PC-9 (cell line): ENCODE measurements at regions of chr5 and their contacts with region 1.

Region 1: DNA sequence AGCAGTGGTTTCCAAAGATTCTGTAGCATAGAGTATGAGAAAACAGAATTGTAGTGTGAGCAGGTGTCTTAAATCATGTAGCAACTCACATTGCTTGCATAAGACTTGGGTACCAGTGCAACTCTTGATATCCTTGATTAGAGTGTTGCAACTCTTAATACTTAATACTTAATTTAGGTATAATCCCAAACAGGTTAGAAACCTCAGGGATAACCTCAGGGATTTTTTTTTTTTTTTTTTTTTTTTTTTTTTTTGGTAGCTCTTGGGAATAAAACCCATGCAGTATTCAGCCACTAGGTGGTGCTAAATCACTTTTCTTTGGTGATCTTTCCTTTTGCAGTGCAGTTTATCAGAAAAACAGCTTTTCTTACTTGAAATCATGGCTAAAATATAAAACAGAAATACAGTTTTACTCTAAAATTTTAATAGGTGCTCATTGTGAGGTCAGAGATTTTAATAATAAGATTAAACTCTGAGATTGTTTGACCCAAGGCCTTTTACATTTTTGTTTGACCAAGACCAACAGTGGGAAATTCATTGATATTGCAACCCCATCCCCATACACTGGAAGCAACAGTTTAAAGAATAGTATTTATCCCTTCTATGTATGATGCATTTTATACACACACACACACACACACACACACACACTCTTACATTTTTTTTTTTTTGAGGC is 55.3 kb downstream of the ERAP1 start:
- DNase-seq: peak in 1 of 2 experiments; percentile 11
- H3K4me3 ChIP-seq: no peak overlapping the region
- H3K27ac ChIP-seq: no peak overlapping the region; the same call in 1 of the 2 replicates
- H3K4me1 ChIP-seq: no peaks in the 10 kb centered on the region
- H3K27me3 ChIP-seq: no peaks in the 10 kb centered on the region
- CTCF ChIP-seq: peak; percentile 78

Region 2: DNA sequence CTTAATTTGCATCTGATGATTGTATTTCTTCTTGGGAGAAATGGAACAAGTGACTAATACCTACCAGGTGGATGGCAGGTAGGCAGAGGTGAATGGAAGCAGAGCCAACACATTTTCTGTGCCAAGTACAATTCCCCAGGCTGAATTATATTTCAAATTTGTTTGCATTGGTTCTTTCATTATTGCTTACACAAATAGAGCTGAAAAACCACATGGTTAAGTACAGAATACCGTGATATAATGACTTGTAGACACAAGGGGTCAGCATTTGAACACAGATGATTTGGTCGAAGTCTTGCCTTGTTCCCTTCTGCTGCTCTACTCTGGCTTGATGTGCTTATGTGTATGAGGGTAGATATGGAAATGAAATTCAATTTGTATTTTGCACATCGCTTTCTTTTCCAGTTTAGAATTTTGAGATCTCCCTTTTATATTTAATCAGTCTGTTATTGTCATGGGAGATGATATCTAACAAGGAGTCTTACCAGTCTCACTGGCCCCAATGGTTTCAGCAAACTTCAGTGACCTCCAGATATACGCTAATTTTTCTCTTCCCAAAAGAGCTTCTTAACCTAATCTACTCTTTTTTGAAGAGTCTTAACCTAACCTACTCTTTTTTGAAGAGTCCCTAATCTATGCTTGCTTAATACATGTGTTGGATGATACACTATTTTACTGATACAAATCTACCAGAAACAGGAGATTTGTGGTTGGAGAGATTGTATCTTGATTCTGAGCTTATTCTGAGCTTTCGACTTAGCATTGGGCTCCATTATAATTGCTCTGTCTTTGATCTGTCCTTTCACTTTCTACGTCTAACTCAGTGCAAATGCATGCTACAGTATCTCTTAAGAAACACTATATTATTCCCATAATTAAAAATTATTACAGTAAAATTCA is 407.6 kb before region 1 on chr5:
- CTCF ChIA-PET with region 1: interaction called, 13 read pairs
- POLR2A ChIA-PET with region 1: no interaction called
- intact Hi-C with region 1: loop called (anchors 10 kb)
- DNase-seq: peak in 1 of 2 experiments; percentile 59
- H3K4me3 ChIP-seq: no peak overlapping the region
- H3K27ac ChIP-seq: no peak overlapping the region
- H3K4me1 ChIP-seq: no peaks in the 10 kb centered on the region
- H3K27me3 ChIP-seq: no peaks in the 10 kb centered on the region
- CTCF ChIP-seq: peak; percentile 70

Region 3: DNA sequence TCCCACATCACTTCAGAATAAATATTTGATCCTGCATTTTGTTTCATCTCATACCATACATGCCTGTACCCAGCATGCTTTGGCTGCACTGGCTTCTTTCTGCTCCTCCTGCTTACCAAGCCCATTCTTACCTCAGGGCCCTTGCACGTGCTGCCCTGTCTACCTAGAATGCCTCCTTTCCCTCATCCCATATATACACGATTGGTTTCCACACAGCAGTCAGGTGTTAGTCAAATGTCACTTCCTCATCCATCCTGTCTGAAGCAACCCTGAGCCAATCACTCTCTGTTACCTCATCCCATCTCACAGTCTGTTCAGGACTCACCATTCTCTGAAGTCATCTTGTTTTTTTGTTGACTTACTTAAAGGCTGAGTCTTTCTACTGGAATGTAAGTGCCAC is 60.0 kb before region 1 on chr5:
- CTCF ChIA-PET with region 1: no interaction called
- POLR2A ChIA-PET with region 1: no interaction called
- intact Hi-C with region 1: no loop called
- DNase-seq: peak in 1 of 2 experiments; percentile 63
- H3K4me3 ChIP-seq: no peak overlapping the region
- H3K27ac ChIP-seq: peak overlapping the region; percentile 37
- H3K4me1 ChIP-seq: peaks cover 8% of the 10 kb centered on the region; the same call in 1 of the 2 replicates
- H3K27me3 ChIP-seq: no peaks in the 10 kb centered on the region
- CTCF ChIP-seq: no peak

Region 4: DNA sequence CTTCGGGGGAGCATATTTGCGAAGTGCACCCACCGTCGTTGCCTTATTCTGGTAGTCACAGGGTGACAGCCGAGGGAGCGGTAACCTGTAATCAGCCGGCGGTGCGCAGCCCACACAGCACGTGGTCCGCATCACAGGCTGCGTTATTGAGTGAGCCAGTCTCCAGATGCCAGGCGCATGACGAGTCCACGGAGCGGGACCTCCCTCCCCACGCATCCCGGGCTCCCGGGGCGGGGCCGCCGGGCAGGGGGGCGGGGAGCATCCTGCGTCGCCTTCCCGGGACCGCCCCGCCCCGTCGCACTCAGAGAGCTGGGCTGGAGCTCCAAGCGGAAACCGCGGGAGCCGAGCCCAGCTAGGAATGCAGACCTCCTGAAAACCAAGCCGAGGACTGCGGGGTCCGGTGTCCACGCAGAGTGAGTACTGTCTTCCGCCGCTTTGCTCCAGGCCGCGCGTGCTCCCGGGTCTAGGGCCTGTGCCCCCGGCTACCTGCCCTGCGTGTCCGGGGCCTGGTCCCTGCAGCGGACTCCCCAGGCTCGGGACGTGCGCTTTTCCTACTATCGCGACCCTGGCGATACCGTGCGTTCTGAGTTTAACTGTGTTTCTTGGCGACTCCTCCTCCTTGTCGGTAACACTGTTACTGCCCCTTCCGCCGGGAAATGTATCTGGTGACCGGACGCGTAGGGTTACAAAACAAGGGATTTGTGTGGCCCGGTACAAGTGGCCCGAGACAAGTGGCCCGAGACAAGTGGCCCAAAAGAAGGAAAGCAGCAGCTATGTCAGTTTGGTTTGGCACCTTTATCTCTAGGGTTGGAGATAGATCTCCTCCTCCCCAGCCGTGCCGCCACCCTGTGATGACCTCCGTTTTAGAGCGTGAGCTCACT is 49.7 kb before region 1 on chr5:
- CTCF ChIA-PET with region 1: no interaction called
- POLR2A ChIA-PET with region 1: no interaction called
- intact Hi-C with region 1: no loop called
- DNase-seq: peak; percentile 82 to 89
- H3K4me3 ChIP-seq: peak overlapping the region; percentile 63
- H3K27ac ChIP-seq: peak overlapping the region; percentile 92
- H3K4me1 ChIP-seq: peaks cover 74% of the 10 kb centered on the region
- H3K27me3 ChIP-seq: no peaks in the 10 kb centered on the region
- CTCF ChIP-seq: 0 out of 2 replicates have a peak, but pooled peaks have one; percentile 17

Region 5: DNA sequence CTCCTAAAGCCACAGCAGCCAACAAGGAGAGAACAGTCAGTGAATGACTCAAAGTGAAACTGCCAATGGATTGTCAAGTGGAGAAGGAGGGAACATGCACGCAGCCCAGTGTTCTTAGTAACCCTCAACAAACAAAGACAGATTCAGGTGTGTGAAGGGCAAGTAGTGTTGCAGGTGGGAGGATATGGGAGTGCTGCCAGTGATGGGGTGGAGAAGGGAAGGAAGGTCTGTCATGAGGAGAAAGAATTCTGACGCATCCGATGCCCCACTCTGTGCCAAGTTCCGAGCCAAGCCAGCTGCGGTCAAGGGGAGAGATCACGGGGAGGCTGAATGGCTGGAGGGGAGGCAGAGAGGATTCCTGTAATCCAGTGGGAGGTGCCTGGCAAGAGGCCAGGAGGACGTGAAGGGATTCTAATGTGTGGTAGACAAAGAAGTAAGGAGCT is 33.8 kb before region 1 on chr5:
- CTCF ChIA-PET with region 1: interaction called, 14 read pairs
- POLR2A ChIA-PET with region 1: no interaction called
- intact Hi-C with region 1: no loop called
- DNase-seq: peak in 1 of 2 experiments; percentile 51
- H3K4me3 ChIP-seq: no peak overlapping the region
- H3K27ac ChIP-seq: no peak overlapping the region
- H3K4me1 ChIP-seq: peaks cover 20% of the 10 kb centered on the region
- H3K27me3 ChIP-seq: no peaks in the 10 kb centered on the region
- CTCF ChIP-seq: no peak

Region 6: GRCh38 chr5:96734871-96735325 is 17.6 kb before region 1 on chr5:
- CTCF ChIA-PET with region 1: interaction called, 14 read pairs
- POLR2A ChIA-PET with region 1: no interaction called
- intact Hi-C with region 1: no loop called
- DNase-seq: no peak
- H3K4me3 ChIP-seq: peak overlapping the region; percentile 14; the same call in 1 of the 2 replicates
- H3K27ac ChIP-seq: peak overlapping the region; percentile 61
- H3K4me1 ChIP-seq: peaks cover 38% of the 10 kb centered on the region
- H3K27me3 ChIP-seq: no peaks in the 10 kb centered on the region
- CTCF ChIP-seq: no peak

Region 7: DNA sequence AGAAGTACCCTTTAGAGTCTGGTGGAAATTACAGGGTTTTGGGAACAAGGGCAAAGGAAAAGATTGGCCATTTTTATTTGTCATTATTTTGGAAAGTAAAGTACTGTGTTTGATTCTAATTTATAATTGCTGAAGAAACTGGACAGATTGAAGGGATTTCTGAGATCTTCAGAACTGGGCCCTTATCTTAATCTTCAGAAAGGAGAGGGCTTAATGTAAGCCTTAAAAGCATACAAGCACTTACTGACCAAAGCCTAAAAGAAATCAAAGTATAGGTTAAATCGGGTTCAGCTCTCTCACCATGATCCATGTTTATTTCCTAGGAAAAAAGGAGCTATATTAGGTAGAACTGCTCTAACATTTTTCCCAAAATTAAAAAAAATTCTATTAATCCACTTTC is 19.6 kb after region 1 on chr5:
- CTCF ChIA-PET with region 1: interaction called, 10 read pairs
- POLR2A ChIA-PET with region 1: no interaction called
- intact Hi-C with region 1: no loop called
- DNase-seq: no peak
- H3K4me3 ChIP-seq: no peak overlapping the region
- H3K27ac ChIP-seq: no peak overlapping the region
- H3K4me1 ChIP-seq: no peaks in the 10 kb centered on the region
- H3K27me3 ChIP-seq: no peaks in the 10 kb centered on the region
- CTCF ChIP-seq: no peak

Region 8: DNA sequence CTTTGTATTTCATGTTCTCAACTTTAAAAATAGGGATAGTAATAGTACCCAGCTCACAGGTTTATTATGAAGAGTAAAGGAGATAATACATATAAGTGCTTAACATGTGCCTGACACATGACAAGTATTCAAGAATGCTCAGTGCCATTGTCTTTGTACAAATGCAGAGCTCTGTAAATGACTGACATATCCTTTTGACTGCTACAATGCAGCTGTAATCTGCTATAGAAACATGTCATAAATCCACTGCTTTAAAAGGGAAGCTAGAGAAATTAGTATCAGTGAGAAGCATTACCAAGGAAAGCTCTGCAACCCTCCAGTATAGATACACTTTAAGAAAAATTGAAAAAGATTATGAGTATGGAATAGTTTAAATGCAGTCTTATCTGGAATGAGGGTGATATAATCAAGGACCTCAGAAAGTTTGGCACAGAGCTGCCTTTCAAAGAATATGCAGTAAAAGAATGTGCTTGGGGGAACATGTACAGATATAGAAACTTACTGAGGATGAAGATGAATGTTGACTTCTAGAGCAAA is 37.4 kb after region 1 on chr5:
- CTCF ChIA-PET with region 1: interaction called, 12 read pairs
- POLR2A ChIA-PET with region 1: no interaction called
- intact Hi-C with region 1: no loop called
- DNase-seq: no peak
- H3K4me3 ChIP-seq: no peak overlapping the region
- H3K27ac ChIP-seq: no peak overlapping the region
- H3K4me1 ChIP-seq: no peaks in the 10 kb centered on the region
- H3K27me3 ChIP-seq: no peaks in the 10 kb centered on the region
- CTCF ChIP-seq: no peak